Left ventricle myocardium superior (tissue), 1 donor: ENCODE measurements at regions of chr3 and their contacts with region 1.

Region 1: DNA sequence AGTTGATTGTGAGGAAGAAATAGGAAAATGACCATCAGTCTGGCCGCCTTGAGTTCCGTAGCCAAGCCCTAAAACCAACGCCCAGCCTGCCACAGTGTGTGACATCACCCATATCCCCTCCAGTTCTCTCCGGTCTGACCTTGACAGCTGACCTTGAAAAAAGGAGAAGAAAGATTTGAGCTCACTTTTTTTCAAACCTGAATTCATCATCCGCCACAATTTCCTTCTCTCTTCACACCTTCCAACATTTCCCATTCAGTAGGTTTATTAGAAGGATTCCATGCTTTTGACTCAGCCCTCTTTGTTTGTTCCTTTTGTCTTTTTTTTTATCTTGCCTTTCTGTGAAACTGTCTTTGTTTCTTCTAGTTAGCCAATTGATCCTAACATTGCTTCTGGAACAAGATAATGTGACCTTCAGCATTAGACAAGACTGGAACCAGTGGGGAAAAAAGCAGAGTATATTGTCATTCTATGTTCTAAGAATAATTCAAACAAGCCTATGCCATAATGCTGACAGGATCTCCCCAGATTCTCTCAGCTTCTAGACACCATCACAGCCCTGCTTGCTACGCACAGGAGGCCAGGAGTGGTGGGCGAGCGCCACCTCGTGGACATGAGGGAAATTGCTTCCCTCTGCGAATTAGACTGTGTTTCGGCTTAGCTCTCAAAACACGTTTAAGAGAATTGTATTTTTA is 283.1 kb downstream of the FGF12 start:
- DNase-seq: peak; percentile 73
- ATAC-seq: peak; percentile 79

Region 2: DNA sequence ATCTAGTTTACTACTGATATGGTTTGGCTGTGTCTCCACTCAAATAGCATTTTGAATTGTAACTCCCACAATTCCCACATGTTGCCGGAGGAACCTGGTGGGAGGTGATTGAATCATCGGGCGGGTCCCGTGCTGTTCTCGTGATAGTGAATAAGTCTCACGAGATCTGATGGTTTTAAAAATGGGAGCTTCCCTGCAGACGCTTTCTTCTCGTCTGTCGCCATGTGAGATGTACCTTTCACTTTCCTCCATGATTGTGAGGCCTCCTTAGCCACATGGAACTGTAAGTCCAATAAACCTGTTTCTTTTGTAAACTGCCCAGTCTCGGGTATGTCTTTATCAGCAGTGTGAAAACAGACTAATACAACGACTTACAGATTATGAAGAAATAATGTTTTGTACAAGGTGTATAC is 1018.9 kb before region 1 on chr3:
- intact Hi-C with region 1: loop called (anchors 10 kb)
- DNase-seq: no peak
- ATAC-seq: no peak

Region 3: GRCh38 chr3:192130534-192131132 is 313.6 kb before region 1 on chr3:
- intact Hi-C with region 1: loop called (anchors 5 kb)
- DNase-seq: peak; percentile 28
- ATAC-seq: peak; percentile 63

Region 4: GRCh38 chr3:192284443-192285087 is 159.7 kb before region 1 on chr3:
- intact Hi-C with region 1: no loop called
- DNase-seq: no peak
- ATAC-seq: no peak